ENCODE measurements at regions of chr9 and their contacts with region 1.

Region 1: GRCh38 chr9:102479191-102479590 is 515.9 kb upstream of the CYLC2 start:
- DNase-seq: no peak
- ATAC-seq: no peak
- H3K4me3 ChIP-seq: no peak overlapping the region
- H3K4me3 Mint-ChIP-seq: no peak overlapping the region
- H3K27ac ChIP-seq: no peak overlapping the region
- H3K27ac Mint-ChIP-seq: no peak overlapping the region
- H3K4me1 ChIP-seq: no peaks in the 10 kb centered on the region
- H3K4me1 Mint-ChIP-seq: no peaks in the 10 kb centered on the region
- H3K27me3 ChIP-seq: no peaks in the 10 kb centered on the region
- H3K27me3 Mint-ChIP-seq: no peaks in the 10 kb centered on the region

Region 2: DNA sequence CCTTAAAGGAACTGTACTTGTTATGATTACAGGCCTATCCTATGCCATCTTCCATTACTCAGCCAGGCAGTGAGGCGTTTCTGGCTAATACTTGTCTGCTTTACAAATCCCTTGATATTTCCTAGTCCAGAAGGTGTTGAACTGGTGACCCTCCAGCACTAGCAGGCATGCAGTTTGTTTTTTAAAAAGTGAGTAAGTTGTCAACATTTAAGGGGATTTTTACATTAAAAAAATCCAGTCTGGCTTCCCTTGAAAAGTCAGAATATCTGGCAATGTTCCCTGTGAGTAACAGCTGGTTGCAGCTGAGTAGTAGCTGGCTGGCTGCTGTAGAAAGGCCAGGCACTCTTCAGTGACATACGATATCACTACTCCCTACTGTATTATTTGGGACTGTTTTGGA is 762.6 kb before region 1 on chr9:
- CTCF ChIA-PET with region 1: no interaction called
- POLR2A ChIA-PET with region 1: no interaction called
- intact Hi-C with region 1: no loop called
- DNase-seq: no peak
- ATAC-seq: no peak
- H3K4me3 ChIP-seq: no peak overlapping the region
- H3K4me3 Mint-ChIP-seq: no peak overlapping the region
- H3K27ac ChIP-seq: no peak overlapping the region
- H3K27ac Mint-ChIP-seq: no peak overlapping the region
- H3K4me1 ChIP-seq: no peaks in the 10 kb centered on the region
- H3K4me1 Mint-ChIP-seq: no peaks in the 10 kb centered on the region
- H3K27me3 ChIP-seq: no peaks in the 10 kb centered on the region
- H3K27me3 Mint-ChIP-seq: peaks cover 2 to 22% (median 21%) of the 10 kb centered on the region in 5 donors

Region 3: GRCh38 chr9:102414350-102414749 is 64.8 kb before region 1 on chr9:
- CTCF ChIA-PET with region 1: no interaction called
- POLR2A ChIA-PET with region 1: no interaction called
- intact Hi-C with region 1: loop called in 1 of 2 experiments (anchors 10 kb)
- DNase-seq: no peak
- ATAC-seq: no peak
- H3K4me3 ChIP-seq: no peak overlapping the region
- H3K4me3 Mint-ChIP-seq: no peak overlapping the region
- H3K27ac ChIP-seq: no peak overlapping the region
- H3K27ac Mint-ChIP-seq: no peak overlapping the region
- H3K4me1 ChIP-seq: no peaks in the 10 kb centered on the region
- H3K4me1 Mint-ChIP-seq: no peaks in the 10 kb centered on the region
- H3K27me3 ChIP-seq: no peaks in the 10 kb centered on the region
- H3K27me3 Mint-ChIP-seq: no peaks in the 10 kb centered on the region

Region 4: GRCh38 chr9:102518324-102518723 is 39.1 kb after region 1 on chr9:
- CTCF ChIA-PET with region 1: no interaction called
- POLR2A ChIA-PET with region 1: no interaction called
- intact Hi-C with region 1: no loop called
- DNase-seq: no peak
- ATAC-seq: no peak
- H3K4me3 ChIP-seq: no peak overlapping the region
- H3K4me3 Mint-ChIP-seq: no peak overlapping the region
- H3K27ac ChIP-seq: no peak overlapping the region
- H3K27ac Mint-ChIP-seq: no peak overlapping the region
- H3K4me1 ChIP-seq: no peaks in the 10 kb centered on the region
- H3K4me1 Mint-ChIP-seq: no peaks in the 10 kb centered on the region
- H3K27me3 ChIP-seq: no peaks in the 10 kb centered on the region
- H3K27me3 Mint-ChIP-seq: no peaks in the 10 kb centered on the region

Measured in naive thymus-derived CD4-positive, alpha-beta T cell (primary cell).